Naive thymus-derived CD4-positive, alpha-beta T cell (primary cell): ENCODE measurements at regions of chr3 and their contacts with region 1.

Region 1: DNA sequence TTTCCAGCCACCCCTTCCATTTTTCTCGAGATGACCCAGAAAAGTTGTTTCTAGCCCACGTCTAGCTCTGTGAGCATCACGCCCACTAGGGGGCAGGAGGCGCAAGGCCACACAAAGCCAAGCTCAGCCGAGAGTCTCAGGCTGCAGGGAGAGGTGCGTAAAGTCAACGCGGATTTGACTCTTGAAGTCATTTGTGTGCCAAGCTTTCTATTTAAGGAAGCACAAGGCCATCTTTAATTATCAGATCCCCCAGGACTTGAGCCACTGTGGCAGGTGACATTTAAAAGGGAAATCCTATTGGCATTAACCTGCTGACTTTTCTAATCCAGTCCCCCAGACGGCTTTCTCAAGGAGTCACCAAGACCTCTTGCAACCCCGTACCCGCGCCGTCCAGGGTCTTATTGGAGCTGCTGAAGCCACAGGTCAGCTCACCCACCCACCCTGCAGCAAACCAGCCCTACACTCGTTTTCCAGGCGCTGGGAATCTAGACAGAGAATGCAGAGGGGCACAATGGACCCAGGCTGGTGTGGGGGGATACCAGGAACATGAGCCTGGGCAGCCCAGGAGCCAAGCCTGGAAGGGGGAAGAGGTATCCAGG is 62.1 kb downstream of the CAPN7 start:
- DNase-seq: peak; percentile 75 to 88 (median 82)
- ATAC-seq: peak; percentile 56
- H3K4me3 ChIP-seq: peak overlapping the region; percentile 4
- H3K4me3 Mint-ChIP-seq: peak overlapping the region in 9 of 10 donors; percentile 8 to 72 (median 56)
- H3K27ac ChIP-seq: no peak overlapping the region
- H3K27ac Mint-ChIP-seq: peak overlapping the region; percentile 32 to 84 (median 70)
- H3K4me1 ChIP-seq: peaks cover 54 to 69% of the 10 kb centered on the region in 2 donors
- H3K4me1 Mint-ChIP-seq: peaks cover 45 to 90% (median 73%) of the 10 kb centered on the region in 7 donors
- H3K27me3 ChIP-seq: no peaks in the 10 kb centered on the region
- H3K27me3 Mint-ChIP-seq: peaks cover 0 to 3% (median 0%) of the 10 kb centered on the region in 5 donors

Region 2: DNA sequence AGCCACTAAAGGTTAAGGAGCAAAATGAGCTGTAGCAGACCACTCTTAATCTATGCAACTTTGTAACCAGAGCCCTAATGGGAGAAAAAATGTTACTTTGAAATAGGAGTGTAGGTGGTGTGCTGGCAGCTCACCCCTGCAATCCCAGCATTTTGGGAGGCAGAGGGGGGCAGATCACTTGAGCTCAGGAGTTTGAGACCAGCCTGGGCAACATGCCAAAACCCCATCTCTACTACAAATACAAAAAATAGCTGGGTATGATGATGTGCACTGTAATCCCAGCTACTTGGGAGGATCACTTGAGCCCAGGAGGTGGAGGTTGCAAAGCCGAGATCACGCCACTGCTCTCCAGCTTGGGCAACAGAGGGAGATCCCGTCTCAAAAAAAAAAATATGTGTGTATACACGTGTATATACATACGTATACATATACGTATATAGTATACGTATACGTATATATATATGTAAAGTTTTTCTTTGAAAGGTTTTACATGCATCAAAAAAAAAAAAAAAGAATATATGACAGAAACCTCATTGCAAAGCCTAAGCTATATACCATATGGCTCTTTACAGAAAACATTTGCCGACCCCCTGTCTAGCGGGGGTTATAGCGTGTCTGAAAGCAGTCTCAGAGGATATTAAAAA is 46.4 kb before region 1 on chr3:
- CTCF ChIA-PET with region 1: no interaction called
- POLR2A ChIA-PET with region 1: no interaction called
- intact Hi-C with region 1: no loop called
- DNase-seq: no peak
- ATAC-seq: no peak
- H3K4me3 ChIP-seq: no peak overlapping the region
- H3K4me3 Mint-ChIP-seq: no peak overlapping the region
- H3K27ac ChIP-seq: no peak overlapping the region
- H3K27ac Mint-ChIP-seq: no peak overlapping the region
- H3K4me1 ChIP-seq: no peaks in the 10 kb centered on the region
- H3K4me1 Mint-ChIP-seq: peaks cover 10 to 29% (median 16%) of the 10 kb centered on the region in 7 donors
- H3K27me3 ChIP-seq: no peaks in the 10 kb centered on the region
- H3K27me3 Mint-ChIP-seq: no peaks in the 10 kb centered on the region

Region 3: DNA sequence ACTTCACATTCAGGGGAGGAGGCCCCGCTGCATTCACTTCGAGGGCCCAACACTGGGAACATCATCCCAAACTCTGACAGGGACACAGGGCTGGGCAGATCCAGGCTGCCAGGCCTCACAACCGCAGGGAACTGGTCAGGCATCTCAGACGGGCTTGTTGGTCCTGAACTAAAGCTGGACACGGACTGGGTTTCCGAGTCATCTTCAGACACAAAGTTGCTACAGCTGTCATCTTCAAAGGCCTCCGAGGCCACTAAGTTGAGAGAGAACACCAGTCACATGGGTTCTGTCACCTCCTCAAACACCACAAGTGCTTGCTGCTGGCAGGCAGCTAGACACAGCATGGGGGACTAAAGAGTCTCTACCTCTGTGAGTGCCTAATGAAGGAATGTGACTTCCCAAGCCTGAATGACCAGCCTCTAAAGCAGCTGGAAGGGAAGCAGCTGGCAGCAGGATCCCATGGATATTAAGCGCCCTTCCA is 11.2 kb before region 1 on chr3:
- CTCF ChIA-PET with region 1: interaction called, 10 read pairs
- POLR2A ChIA-PET with region 1: interaction called, 9 read pairs
- intact Hi-C with region 1: no loop called
- DNase-seq: no peak
- ATAC-seq: no peak
- H3K4me3 ChIP-seq: no peak overlapping the region
- H3K4me3 Mint-ChIP-seq: no peak overlapping the region
- H3K27ac ChIP-seq: no peak overlapping the region
- H3K27ac Mint-ChIP-seq: peak overlapping the region in 8 of 9 donors; percentile 8 to 86 (median 62)
- H3K4me1 ChIP-seq: no peaks in the 10 kb centered on the region
- H3K4me1 Mint-ChIP-seq: peaks cover 0 to 14% (median 6%) of the 10 kb centered on the region in 7 donors
- H3K27me3 ChIP-seq: no peaks in the 10 kb centered on the region
- H3K27me3 Mint-ChIP-seq: no peaks in the 10 kb centered on the region

Region 4: DNA sequence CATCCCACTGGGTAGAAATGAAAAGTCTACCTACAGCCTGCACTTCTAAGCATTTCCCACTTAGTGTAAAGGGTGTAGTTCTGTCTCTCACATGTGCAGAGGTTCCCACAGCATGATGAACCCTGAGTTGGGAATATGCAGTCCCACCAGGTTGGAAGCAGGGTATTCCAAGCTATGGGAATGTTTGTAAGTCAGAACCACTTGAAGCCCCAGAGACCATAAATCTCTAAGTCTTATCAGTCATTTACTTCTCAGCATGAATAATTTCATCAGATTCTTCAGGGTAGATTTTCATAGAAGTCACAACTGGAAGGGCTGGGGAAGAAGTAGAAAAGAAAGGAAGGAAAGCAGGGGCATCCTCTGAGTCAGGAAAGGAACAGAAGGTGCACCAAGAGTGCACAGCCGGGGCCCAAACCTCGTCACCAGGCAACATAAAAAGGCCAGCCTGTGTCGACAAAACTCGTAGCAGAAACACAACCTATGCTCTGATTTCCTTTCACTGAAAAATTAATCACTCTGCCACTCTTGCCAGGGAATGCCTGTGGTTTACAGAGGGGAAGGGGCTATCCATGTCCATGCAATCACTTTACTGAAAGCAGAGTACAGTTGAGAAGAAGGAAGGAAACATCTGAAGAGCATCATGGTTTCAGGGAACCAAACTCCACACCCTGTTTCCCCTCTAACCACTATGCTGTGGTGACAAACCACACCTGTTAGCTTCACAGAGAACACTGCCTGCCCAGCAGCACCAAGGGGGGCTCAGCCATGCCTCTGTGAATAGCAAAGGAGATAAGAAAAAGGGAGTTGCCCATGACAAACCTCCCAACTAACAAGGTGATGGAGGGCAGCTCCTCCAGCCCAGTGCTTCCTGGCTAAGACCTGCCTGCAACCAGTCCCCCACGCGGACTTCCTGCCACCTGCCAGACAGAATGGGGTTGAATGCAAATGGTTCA is 23.7 kb after region 1 on chr3:
- CTCF ChIA-PET with region 1: interaction called, 12 read pairs
- POLR2A ChIA-PET with region 1: interaction called, 17 read pairs
- intact Hi-C with region 1: loop called (anchors 1 kb)
- DNase-seq: peak in 8 of 9 donors; percentile 61 to 78 (median 68)
- ATAC-seq: peak; percentile 84
- H3K4me3 ChIP-seq: peak overlapping the region; percentile 28
- H3K4me3 Mint-ChIP-seq: peak overlapping the region; percentile 74 to 86 (median 80)
- H3K27ac ChIP-seq: peak overlapping the region; percentile 23
- H3K27ac Mint-ChIP-seq: peak overlapping the region; percentile 77 to 97 (median 94)
- H3K4me1 ChIP-seq: peaks cover 58 to 62% of the 10 kb centered on the region in 2 donors
- H3K4me1 Mint-ChIP-seq: peaks cover 64 to 96% (median 85%) of the 10 kb centered on the region in 7 donors
- H3K27me3 ChIP-seq: no peaks in the 10 kb centered on the region
- H3K27me3 Mint-ChIP-seq: no peaks in the 10 kb centered on the region

Region 5: GRCh38 chr3:15309662-15310335 is 41.7 kb after region 1 on chr3:
- CTCF ChIA-PET with region 1: interaction called, 14 read pairs
- POLR2A ChIA-PET with region 1: interaction called, 7 read pairs
- intact Hi-C with region 1: loop called (anchors 1 kb)
- DNase-seq: no peak
- ATAC-seq: no peak
- H3K4me3 ChIP-seq: no peak overlapping the region
- H3K4me3 Mint-ChIP-seq: peak overlapping the region in 6 of 10 donors; percentile 17 to 69 (median 46)
- H3K27ac ChIP-seq: no peak overlapping the region
- H3K27ac Mint-ChIP-seq: peak overlapping the region in 8 of 9 donors; percentile 23 to 89 (median 66)
- H3K4me1 ChIP-seq: peaks cover 44 to 52% of the 10 kb centered on the region in 2 donors
- H3K4me1 Mint-ChIP-seq: peaks cover 36 to 72% (median 63%) of the 10 kb centered on the region in 7 donors
- H3K27me3 ChIP-seq: no peaks in the 10 kb centered on the region
- H3K27me3 Mint-ChIP-seq: no peaks in the 10 kb centered on the region

Region 6: DNA sequence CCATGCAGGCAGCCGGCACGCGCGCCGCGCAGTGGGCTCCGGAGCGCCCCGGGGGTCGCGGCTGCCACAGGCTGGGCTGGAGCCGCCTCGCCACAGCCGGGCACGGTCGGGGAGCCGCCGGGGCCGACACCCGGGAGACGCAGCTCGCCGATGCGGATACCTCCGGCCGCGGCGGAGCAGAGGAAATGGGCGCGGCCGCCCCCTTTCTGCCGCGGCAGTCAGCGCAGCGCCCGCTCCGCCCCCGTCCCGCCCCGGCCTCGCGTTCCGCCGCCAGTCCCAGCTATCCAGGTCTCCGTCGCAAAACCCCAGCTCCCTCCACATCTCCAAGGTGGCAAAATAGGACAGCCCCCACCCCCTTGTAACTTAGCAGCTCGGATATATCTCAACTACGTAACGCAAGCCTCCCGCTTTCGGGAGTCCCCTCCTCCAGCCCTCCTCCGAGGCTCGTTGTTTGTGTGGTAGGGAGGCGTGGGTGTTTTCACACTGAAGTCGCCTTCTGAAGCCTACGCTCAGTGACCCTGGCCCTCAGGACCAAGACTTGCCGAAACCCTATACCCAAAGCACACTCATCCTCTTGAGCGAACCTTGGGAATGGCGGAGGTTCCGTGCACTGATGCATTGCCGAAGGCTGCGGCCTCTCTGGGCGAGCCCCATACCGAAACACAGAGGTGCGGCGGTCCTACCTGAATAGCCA is 64.4 kb after region 1 on chr3 and contains the start of gene SH3BP5:
- CTCF ChIA-PET with region 1: interaction called, 139 read pairs
- POLR2A ChIA-PET with region 1: interaction called, 17 read pairs
- intact Hi-C with region 1: loop called (anchors 1 kb)
- DNase-seq: peak; percentile 52 to 82 (median 71)
- ATAC-seq: peak; percentile 94
- H3K4me3 ChIP-seq: peak within 1 kb of the TSS; percentile 96
- H3K4me3 Mint-ChIP-seq: peak within 1 kb of the TSS; percentile 93 to 99 (median 95)
- H3K27ac ChIP-seq: peak within 1 kb of the TSS; percentile 86
- H3K27ac Mint-ChIP-seq: peak within 1 kb of the TSS; percentile 87 to 95 (median 91)
- H3K4me1 ChIP-seq: peaks cover 37 to 45% of the 10 kb centered on the region in 2 donors
- H3K4me1 Mint-ChIP-seq: peaks cover 35 to 57% (median 54%) of the 10 kb centered on the region in 7 donors
- H3K27me3 ChIP-seq: no peaks in the 10 kb centered on the region
- H3K27me3 Mint-ChIP-seq: no peaks in the 10 kb centered on the region
- total RNA-seq, gene SH3BP5: 18.5 to 64.7 (median 39.5) TPM

Region 7: DNA sequence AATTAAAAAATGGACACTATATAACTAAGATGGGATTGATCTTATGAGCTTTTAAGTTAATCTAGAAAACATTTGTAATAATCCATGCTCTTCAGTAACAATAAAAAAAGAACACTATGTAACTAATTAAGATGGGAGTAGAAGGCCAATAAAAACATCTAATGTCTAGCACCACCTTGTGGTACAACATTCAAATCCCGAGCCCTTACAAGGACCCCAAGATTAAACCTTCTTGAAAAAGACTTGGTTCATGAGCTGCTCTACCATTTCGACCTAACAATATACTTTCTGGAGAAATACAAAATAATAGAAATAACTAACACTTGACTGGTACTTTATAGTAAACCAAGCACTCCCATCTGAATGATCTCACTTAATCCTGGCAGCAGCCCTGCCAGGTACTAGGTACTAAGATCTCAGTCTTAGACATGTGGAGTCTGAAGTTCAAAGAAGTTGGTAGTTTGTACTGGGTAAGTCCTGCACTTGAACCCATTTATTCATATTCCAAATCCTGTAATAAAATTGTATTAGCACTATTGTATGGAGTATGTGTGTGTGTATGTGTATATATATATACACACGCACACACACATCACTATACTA is 137.4 kb after region 1 on chr3:
- CTCF ChIA-PET with region 1: interaction called, 30 read pairs
- POLR2A ChIA-PET with region 1: interaction called, 3 read pairs
- intact Hi-C with region 1: loop called (anchors 1 kb)
- DNase-seq: peak in 7 of 9 donors; percentile 28 to 63 (median 49)
- ATAC-seq: peak; percentile 75
- H3K4me3 ChIP-seq: no peak overlapping the region
- H3K4me3 Mint-ChIP-seq: no peak overlapping the region
- H3K27ac ChIP-seq: no peak overlapping the region
- H3K27ac Mint-ChIP-seq: no peak overlapping the region
- H3K4me1 ChIP-seq: peaks cover 0 to under 1% of the 10 kb centered on the region in 2 donors
- H3K4me1 Mint-ChIP-seq: peaks cover 0 to 7% (median 1%) of the 10 kb centered on the region in 7 donors
- H3K27me3 ChIP-seq: no peaks in the 10 kb centered on the region
- H3K27me3 Mint-ChIP-seq: no peaks in the 10 kb centered on the region